Tibial artery (tissue), 4 donors: ENCODE measurements at regions of chr11 and their contacts with region 1.

Region 1: DNA sequence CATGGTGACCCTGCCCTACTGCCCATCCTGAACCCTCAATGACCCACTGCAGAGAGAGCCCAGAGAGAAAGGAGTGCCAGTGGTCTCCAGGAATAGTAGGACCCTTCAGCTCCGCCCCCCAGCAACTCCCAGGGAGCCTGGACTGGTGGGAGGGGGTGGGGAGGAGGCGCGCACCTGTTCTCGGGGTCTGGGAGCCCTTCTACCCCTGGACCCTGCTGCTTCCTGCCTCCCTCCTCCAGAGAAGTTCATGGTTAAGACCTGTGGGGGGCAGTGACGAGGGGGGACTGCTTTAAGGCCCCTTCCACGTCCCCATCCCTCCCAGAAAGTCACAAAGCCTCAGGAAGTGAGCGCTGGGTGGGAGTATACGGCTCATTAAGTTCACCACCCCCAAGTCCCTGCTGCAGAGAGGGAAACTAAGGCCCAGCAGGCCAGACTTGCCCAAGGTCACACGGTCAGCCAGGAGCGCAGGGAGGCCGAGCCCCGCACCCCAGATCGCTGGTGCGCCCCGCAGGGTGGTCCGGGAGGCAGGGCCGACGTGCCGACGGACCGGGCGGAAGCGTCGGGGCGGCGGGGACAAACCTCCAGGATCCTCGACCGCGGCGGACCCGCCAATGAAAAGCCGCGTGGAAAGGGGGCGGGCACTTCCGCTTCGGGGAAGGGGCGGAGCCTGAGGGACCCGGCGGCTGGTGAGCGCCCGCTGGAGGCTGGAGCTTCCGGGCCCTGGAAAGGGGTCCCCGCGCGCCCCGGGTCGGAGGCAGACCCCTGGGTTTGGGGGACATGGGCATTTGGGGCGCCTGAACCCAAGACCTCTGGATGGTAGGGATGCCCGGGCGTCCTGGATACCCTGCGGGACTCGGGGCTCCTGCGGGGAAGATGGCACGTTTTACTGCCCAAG is at the starts of genes NUDT22 and TRPT1:
- DNase-seq: peak; percentile 86 to 96
- H3K4me3 ChIP-seq: peak within 1 kb of the TSS; percentile 86 to 88
- H3K27ac ChIP-seq: peak within 1 kb of the TSS; percentile 81 to 95
- H3K4me1 ChIP-seq: peaks cover 0 to 42% (median 37%) of the 10 kb centered on the region in 4 donors
- H3K27me3 ChIP-seq: no peaks in the 10 kb centered on the region
- CTCF ChIP-seq: peak in 1 of 2 experiments; percentile 14

Region 2: DNA sequence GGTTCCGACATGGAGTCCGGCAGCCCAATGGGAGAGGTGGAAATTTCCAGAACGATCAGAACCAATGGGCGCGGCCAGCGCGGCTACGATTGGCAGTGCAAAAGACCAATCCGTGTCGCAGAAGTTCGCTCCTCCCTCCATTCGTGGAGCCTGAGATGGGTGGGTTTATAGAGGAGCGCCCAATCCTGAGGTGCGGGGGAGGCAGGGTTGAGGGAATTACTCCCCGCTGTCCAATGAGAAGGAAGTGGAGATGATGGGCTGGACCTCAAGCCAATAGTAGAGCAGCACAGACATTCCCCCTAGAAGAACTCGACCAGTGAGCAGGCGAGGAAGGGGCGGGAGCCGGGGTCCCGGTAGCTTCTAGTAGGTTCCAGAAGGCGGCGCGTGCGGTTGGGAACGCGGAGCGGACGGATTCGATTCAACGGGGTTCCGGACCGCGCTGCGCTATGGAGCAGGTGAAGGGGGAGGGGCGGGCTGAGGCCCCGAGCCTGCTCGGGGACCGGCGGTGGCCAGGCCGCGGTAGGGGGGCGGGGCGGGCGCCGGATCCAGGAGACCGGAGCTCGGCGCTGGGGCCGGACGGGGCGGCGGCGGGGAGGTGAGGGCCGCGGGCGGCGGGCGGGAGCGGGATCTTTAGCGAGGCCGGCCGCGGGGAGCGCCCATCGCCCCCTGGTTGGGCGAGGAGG is 39.9 kb before region 1 on chr11 and contains the start of gene STIP1:
- intact Hi-C with region 1: loop called (anchors 5 kb)
- DNase-seq: peak; percentile 99 to 100
- H3K4me3 ChIP-seq: peak within 1 kb of the TSS in 1 of 2 donors; percentile 64
- H3K27ac ChIP-seq: peak within 1 kb of the TSS; percentile 87 to 89
- H3K4me1 ChIP-seq: peaks cover 0 to 48% (median 33%) of the 10 kb centered on the region in 4 donors
- H3K27me3 ChIP-seq: no peaks in the 10 kb centered on the region
- CTCF ChIP-seq: peak; percentile 36 to 47

Region 3: GRCh38 chr11:64269380-64270234 is 43.7 kb after region 1 on chr11:
- intact Hi-C with region 1: no loop called
- DNase-seq: peak; percentile 98 to 99
- H3K4me3 ChIP-seq: peak overlapping the region; percentile 60 to 77
- H3K27ac ChIP-seq: peak overlapping the region; percentile 84 to 96
- H3K4me1 ChIP-seq: peaks cover 6 to 35% (median 22%) of the 10 kb centered on the region in 4 donors
- H3K27me3 ChIP-seq: no peaks in the 10 kb centered on the region
- CTCF ChIP-seq: no peak

Region 4: GRCh38 chr11:64378335-64378880 is 152.5 kb after region 1 on chr11:
- intact Hi-C with region 1: no loop called
- DNase-seq: peak in 1 of 2 donors; percentile 78
- H3K4me3 ChIP-seq: no peak overlapping the region
- H3K27ac ChIP-seq: no peak overlapping the region
- H3K4me1 ChIP-seq: peaks cover 0 to 13% (median 8%) of the 10 kb centered on the region in 4 donors
- H3K27me3 ChIP-seq: no peaks in the 10 kb centered on the region
- CTCF ChIP-seq: no peak